ENCODE measurements at regions of chr1 and their contacts with region 1.

Region 1: GRCh38 chr1:29181413-29182225 is at the start of gene SRSF4:
- DNase-seq: peak; percentile 99
- H3K4me3 Mint-ChIP-seq: peak within 1 kb of the TSS; percentile 98
- H3K27ac Mint-ChIP-seq: peak within 1 kb of the TSS; percentile 95
- H3K4me1 Mint-ChIP-seq: peaks cover 50% of the 10 kb centered on the region
- H3K27me3 Mint-ChIP-seq: no peaks in the 10 kb centered on the region
- total RNA-seq, gene SRSF4: 121 to 123 TPM

Region 2: DNA sequence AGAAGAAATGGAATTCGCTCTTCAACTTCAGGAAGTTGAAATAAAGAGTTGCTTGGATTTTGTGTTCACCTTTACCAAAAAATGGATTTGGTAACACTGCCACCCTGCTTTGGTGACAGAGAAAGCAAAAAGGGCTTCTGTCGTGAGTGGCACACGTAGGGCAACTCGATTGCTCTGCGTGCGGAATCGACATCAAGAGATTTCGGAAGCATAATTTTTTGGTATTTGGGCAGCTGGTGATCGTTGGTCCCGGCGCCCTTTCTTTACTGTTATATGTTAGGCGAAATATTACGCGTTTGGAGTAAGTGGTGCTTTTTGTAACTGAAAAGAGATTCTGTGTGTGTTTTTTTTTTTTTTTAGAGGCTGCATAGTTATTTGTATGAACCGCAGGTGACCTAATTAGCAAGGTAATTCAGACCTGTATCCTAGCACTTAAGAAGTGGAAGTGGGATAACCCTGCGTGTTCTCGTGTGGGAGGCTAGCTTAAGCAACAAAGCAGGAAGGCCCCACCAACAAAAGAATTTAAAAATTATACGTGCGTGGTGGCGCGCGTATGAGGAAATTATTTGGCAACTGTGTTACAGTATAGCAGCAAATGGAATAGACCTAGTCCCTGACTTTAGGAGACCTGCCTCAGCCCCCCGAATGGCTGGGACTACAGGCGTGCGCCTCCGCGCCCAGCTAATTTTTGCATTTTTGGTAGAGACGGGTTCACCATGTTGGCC is 533.0 kb before region 1 on chr1 and contains the start of gene RNU11:
- CTCF ChIA-PET with region 1: interaction called, 6 read pairs
- POLR2A ChIA-PET with region 1: interaction called, 21 read pairs
- DNase-seq: peak; percentile 90
- H3K4me3 Mint-ChIP-seq: peak within 1 kb of the TSS; percentile 79
- H3K27ac Mint-ChIP-seq: peak within 1 kb of the TSS; percentile 99
- H3K4me1 Mint-ChIP-seq: peaks cover 33% of the 10 kb centered on the region
- H3K27me3 Mint-ChIP-seq: no peaks in the 10 kb centered on the region
- total RNA-seq, gene RNU11: not detected

Region 3: DNA sequence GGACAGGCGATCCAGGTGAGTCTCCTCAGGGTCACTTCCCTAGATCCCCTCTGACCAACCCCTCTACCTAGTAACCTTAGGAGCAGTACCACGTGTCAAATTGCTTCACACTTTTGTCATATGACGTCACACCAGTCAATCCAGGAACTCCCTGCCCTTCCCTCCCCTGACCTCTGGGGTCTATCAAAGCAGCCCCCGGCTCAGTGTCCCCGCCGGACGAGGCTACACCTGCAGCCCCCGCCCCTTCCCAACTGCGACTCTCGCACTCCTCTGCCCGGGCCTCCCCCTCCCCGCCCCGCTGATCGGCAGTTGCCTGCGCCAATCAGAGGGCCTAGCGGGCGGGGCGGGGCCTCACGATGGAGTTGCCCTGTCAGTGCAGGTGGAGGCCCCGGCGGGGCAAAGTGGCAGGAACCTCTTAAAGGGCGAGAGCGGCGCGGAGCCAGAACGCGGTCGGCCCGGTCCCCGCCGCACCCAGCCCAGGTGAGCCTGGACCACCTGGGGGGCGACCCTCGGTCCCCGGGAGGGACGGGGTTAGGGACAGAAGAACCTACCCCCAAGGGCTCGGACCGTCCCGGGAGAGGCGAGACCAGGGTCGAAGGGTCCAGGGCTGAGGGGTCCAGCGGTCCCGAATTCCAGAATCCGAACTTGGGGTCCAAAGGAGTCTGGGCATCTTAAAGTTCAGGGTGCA is 294.7 kb before region 1 on chr1:
- CTCF ChIA-PET with region 1: interaction called, 18 read pairs
- POLR2A ChIA-PET with region 1: interaction called, 19 read pairs
- DNase-seq: peak; percentile 92
- H3K4me3 Mint-ChIP-seq: peak overlapping the region; percentile 89
- H3K27ac Mint-ChIP-seq: peak overlapping the region; percentile 82
- H3K4me1 Mint-ChIP-seq: peaks cover 55% of the 10 kb centered on the region
- H3K27me3 Mint-ChIP-seq: no peaks in the 10 kb centered on the region

Region 4: GRCh38 chr1:29124366-29125236 is 57.0 kb before region 1 on chr1:
- CTCF ChIA-PET with region 1: interaction called, 7 read pairs
- POLR2A ChIA-PET with region 1: interaction called, 12 read pairs
- DNase-seq: peak; percentile 63
- H3K4me3 Mint-ChIP-seq: peak overlapping the region; percentile 67
- H3K27ac Mint-ChIP-seq: no peak overlapping the region
- H3K4me1 Mint-ChIP-seq: peaks cover 14% of the 10 kb centered on the region
- H3K27me3 Mint-ChIP-seq: peaks cover 36% of the 10 kb centered on the region

Region 5: DNA sequence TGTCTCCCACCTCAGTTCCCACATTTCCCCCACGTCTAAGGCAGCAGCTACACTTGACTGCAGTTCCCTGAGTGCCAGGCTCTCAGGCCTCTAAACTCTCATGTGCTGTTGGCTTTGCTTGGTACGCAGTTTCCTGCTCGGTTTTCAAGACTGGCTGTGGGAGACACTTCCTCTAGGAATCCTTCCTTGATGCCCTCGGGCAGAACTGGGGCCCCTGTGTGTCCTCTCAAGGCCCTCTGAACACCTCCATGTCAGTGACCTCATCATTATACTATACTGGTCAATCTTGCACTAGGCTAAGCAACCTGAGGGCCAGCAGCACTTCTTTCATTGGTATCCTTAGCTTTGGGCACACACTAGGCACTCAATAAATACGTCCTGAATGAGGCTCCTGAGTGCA is 10.6 kb after region 1 on chr1:
- CTCF ChIA-PET with region 1: interaction called, 34 read pairs
- POLR2A ChIA-PET with region 1: interaction called, 44 read pairs
- DNase-seq: no peak
- H3K4me3 Mint-ChIP-seq: no peak overlapping the region
- H3K27ac Mint-ChIP-seq: no peak overlapping the region
- H3K4me1 Mint-ChIP-seq: no peaks in the 10 kb centered on the region
- H3K27me3 Mint-ChIP-seq: no peaks in the 10 kb centered on the region

Region 6: DNA sequence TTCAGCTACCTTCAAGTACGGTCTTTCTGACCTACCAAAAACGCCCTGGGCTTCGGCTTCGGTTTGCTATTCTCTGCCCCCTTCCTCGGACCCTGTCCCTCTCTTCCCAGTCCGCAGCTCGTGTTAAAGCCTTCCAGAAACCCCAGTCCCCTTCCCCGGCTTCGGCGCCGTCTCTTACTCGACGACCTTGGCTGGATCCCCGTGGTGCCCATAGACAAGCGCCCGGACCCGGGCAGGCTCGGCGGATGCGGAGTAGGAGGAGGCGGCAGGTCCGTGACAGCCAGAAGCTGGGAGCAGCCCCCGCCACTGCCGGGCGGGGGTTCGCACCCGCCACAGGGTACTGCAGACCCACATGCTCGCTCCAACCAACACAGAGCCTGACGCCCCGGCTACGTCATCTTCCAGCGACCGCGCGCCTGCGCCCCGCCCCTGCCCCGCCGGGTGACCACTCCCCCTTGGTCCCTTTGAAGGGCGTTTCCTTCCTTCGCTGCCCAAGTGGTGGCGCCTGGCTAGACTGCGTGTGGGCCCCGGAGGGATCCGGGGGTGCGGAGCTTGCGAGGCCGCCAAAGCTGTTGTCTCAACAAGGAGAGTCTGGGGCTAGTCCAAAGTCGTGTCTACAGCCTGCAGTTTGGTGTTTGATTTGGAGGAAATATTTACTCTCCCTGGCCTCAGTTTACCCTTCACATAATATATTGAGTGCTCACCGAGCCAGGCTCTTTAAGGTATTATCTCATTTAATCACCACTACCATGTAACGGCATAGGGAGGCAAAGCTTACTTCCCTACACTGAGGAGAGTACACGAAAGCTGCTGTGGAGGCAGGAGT is 49.1 kb after region 1 on chr1 and contains the start of gene MECR:
- CTCF ChIA-PET with region 1: interaction called, 3 read pairs
- POLR2A ChIA-PET with region 1: interaction called, 18 read pairs
- DNase-seq: peak; percentile 96
- H3K4me3 Mint-ChIP-seq: peak within 1 kb of the TSS; percentile 98
- H3K27ac Mint-ChIP-seq: peak within 1 kb of the TSS; percentile 81
- H3K4me1 Mint-ChIP-seq: peaks cover 20% of the 10 kb centered on the region
- H3K27me3 Mint-ChIP-seq: peaks cover 17% of the 10 kb centered on the region
- total RNA-seq, gene MECR: 13.9 to 17.6 TPM